ENCODE measurements at regions of chr22 and their contacts with region 1.

Region 1: GRCh38 chr22:40469181-40469580 is 98.8 kb downstream of the SGSM3 start:
- DNase-seq: no peak
- ATAC-seq: no peak
- H3K4me3 ChIP-seq: no peak overlapping the region
- H3K27ac ChIP-seq: no peak overlapping the region
- H3K4me1 ChIP-seq: no peaks in the 10 kb centered on the region; the same call in 1 of the 2 replicates
- H3K27me3 ChIP-seq: no peaks in the 10 kb centered on the region
- CTCF ChIP-seq: no peak

Region 2: DNA sequence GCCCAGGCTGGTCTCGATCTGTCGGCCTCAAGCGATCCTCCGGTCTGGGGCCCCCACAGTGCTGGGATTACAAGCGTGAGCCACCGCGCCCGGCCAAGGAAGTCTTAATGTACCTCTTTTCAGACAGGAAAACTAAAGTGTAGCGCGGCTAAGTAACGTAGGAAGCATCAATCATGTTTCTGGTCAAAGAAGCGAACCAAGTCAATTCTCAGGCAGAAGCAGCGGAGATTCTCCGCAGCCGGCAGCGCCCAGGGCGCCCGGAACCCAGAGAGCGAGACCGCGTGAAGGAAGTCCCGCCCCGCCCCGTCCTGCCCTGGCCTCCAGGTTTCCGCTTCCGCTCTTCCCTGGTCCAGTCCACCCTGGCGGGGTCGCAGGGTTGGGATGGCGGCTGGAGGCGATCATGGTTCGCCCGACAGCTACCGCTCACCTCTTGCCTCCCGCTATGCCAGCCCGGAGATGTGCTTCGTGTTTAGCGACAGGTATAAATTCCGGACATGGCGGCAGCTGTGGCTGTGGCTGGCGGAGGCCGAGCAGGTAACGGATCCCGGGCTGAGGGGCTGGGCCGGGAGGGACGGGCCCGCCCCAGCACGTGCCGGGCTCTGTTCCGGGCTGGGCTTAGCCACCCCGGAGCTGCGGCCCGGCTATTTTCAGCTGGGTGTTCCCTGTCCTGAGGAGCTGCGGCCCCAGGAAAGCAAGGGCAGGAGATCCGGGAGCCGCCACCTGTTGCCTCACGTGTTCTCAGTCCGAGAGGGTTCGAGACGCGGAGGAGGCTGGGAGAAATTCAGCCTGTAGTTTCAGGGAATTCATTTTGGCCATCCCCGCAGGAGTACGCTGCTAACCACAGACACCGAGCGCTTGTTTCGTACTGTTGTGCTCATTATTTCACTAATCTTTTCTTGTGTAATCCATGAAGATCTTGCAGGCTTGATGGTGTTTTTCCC is 122.7 kb before region 1 on chr22 and contains the start of gene ADSL:
- CTCF ChIA-PET with region 1: no interaction called
- POLR2A ChIA-PET with region 1: no interaction called
- in situ Hi-C with region 1: no loop called
- intact Hi-C with region 1: no loop called
- DNase-seq: peak; percentile 36
- ATAC-seq: peak; percentile 99
- H3K4me3 ChIP-seq: peak within 1 kb of the TSS; percentile 85 to 96
- H3K27ac ChIP-seq: peak within 1 kb of the TSS; percentile 96
- H3K4me1 ChIP-seq: peaks cover 8% of the 10 kb centered on the region
- H3K27me3 ChIP-seq: no peaks in the 10 kb centered on the region
- CTCF ChIP-seq: no peak
- total RNA-seq, gene ADSL: 107 TPM

Region 3: GRCh38 chr22:40487663-40488249 is 18.6 kb after region 1 on chr22:
- CTCF ChIA-PET with region 1: no interaction called
- POLR2A ChIA-PET with region 1: interaction called, 10 read pairs
- in situ Hi-C with region 1: no loop called
- intact Hi-C with region 1: no loop called
- DNase-seq: no peak
- ATAC-seq: peak; percentile 74
- H3K4me3 ChIP-seq: no peak overlapping the region
- H3K27ac ChIP-seq: peak overlapping the region; percentile 48; the same call in 1 of the 2 replicates
- H3K4me1 ChIP-seq: peaks cover 21% of the 10 kb centered on the region
- H3K27me3 ChIP-seq: no peaks in the 10 kb centered on the region
- CTCF ChIP-seq: peak; percentile 70; the same call in 1 of the 2 replicates

Region 4: GRCh38 chr22:40533712-40534378 is 64.7 kb after region 1 on chr22:
- CTCF ChIA-PET with region 1: no interaction called
- POLR2A ChIA-PET with region 1: no interaction called
- in situ Hi-C with region 1: no loop called
- intact Hi-C with region 1: no loop called
- DNase-seq: no peak
- ATAC-seq: peak; percentile 78
- H3K4me3 ChIP-seq: peak overlapping the region; percentile 33 to 45
- H3K27ac ChIP-seq: peak overlapping the region; percentile 94
- H3K4me1 ChIP-seq: peaks cover 43% of the 10 kb centered on the region
- H3K27me3 ChIP-seq: no peaks in the 10 kb centered on the region
- CTCF ChIP-seq: no peak